ENCODE measurements at regions of chr1 and their contacts with region 1.

Region 1: DNA sequence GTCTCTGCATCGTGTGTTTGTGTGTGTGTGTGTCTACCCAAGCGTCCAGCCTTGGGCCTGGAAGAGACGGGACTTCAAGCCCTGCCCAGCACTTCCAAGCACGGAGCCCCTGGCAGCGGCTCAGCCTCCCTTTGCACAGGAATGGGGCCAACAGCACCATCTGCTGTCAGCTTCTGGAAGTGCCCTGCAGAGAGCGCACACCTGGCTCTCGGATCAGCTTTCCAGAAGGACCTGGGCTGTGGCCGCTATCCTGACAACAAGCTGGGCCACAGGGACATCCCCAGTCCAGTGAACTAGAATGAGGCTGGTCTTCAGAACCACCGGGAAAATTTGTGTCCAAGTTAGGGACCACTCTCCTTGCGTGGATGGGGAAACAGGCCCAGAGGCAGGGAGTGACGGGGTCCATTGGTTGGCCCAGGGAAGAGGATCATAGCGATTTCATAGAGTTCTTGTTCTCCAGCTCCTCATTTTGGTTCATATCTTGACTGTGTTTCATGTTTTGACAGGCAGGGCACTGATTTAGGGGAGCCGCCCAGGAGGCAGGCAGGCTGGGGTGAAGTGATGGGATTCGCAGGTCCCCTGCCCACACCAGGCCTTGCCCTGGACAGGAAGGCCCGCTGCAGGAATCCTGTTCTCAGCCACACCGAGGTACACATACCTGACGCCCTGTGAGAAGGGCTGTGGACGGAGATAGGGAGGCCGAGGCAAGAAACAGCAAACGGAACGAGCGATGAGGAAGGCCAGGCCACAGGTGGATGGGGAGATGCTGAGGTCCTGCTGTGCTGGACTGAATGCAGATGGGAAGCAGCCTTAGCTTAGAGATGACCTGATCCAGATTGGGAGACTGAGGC is 38.4 kb downstream of the TAS1R2 start:
- DNase-seq: peak; percentile 72
- H3K4me3 ChIP-seq: no peak overlapping the region
- H3K27ac ChIP-seq: no peak overlapping the region
- H3K4me1 ChIP-seq: no peaks in the 10 kb centered on the region
- H3K27me3 ChIP-seq: peaks cover 77% of the 10 kb centered on the region
- CTCF ChIP-seq: peak; percentile 91

Region 2: DNA sequence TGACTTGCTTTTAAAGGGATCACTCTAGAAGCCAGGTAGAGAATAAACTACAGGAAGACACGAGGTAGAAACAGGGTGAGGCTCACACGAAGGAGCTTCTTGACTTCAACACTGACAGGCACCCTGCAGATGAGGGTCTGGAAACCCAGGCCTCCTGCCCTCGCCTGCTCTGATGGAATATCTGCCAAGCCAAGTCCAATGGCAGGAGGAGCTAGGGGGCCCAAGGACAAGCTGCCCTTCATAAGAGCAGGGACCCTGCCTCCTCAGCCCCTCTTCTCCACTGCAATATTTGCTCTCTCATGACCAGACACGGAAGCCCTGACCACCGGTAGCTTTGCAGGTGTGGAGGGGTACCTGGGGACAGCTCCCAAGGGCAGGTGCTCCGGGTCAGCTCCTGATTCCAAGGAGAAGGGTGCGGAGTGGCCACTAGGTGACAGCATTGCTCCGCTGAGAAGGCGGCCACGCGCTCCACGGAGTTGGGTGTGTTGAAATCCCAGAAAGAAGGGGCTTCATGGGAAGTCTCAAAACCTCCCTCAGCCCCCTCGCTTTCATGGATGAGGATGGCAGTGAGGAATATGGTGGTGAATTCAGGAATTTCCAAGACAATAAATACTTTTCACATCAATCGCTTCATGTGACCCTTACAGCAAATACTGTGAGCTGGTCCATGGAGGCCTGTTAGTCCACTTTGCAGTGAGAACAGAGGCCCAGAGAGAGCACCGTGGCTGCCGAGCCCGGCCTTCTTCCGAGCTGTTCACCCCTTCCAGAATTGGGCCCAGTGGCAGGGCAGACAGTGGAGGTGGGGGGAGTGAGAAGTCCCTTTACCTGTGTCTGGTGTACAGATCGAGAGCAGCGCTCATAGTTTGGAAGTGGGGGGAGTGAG is 223.6 kb before region 1 on chr1:
- intact Hi-C with region 1: loop called (anchors 5 kb)
- DNase-seq: peak; percentile 46
- H3K4me3 ChIP-seq: no peak overlapping the region
- H3K27ac ChIP-seq: no peak overlapping the region
- H3K4me1 ChIP-seq: no peaks in the 10 kb centered on the region
- H3K27me3 ChIP-seq: peaks cover 92% of the 10 kb centered on the region
- CTCF ChIP-seq: peak; percentile 96

Region 3: DNA sequence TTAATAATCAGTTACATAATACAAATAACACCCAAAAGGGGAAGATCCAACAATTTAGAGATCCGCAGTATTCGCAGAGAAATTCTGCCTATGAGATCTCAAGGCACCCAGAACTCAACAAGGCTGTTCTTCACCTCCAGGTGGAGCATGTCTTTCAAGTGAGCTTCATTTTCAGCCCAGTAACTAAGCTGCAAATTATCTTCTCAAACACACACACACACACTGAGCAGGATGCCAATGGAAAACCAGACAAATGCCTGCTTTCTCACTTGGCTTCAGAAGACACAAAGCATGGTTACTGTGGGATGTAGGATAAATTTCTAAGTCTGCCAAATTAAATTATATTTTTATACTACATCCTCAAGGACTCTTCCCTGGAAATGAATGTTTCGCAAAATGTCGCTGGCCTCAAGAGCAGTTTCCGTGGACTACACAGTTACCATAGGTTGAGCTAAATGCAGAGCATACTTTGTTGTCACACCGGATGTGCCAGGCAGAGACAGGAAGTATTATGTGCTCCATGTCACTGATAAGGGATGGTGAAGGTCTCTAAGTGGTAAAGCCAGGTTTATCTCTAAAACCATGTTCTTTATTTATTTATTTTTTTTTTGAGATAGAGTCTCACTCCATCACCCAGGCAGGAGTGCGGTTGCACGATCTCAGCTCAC is 358.7 kb after region 1 on chr1:
- intact Hi-C with region 1: no loop called
- DNase-seq: no peak
- H3K4me3 ChIP-seq: no peak overlapping the region
- H3K27ac ChIP-seq: peak overlapping the region; percentile 40
- H3K4me1 ChIP-seq: peaks cover 17% of the 10 kb centered on the region
- H3K27me3 ChIP-seq: no peaks in the 10 kb centered on the region
- CTCF ChIP-seq: peak; percentile 56